Dorsolateral prefrontal cortex (tissue), 120 donors: ENCODE measurements at regions of chr9 and their contacts with region 1.

Region 1: DNA sequence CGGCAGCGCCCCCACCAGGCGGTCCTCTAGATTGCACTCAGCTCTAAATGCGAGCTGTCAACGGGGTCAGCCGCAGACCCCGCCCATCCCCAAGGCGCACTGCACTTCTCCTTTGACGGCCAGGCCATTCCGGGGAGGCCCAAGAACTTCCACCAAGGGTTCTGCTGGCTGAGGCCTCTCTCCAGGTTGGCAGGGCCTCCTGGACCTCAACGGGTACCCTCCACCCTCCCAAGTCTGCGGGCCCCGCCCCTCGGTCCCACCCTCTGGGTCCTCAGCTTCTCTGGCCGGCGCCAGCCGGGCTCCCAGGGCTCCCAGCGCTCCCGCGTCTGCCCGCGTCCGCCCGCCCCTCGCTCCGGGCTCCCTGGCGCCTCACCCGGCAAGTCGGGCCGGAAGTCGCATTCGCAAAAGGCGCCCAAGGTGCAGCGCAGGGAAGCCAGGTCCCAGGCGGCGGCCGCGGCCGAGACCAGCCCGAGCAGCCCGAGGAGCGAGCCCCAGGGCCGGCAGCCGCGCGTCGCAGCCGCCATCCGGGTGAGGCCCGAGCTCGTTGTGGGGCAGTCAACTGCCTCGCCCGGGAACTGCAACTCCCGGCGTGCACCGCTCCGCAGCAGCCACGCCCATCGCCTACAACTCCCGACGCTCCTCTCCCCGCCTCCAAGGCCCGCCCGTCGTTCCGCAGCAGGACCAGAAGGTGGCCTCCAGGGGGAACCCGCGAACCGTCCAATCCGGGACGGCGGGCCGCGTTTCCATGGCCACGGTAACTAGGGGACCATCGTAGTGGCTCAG is at the start of gene TOR2A:
- DNase-seq: peak; percentile 92 to 99 (median 97)
- H3K4me3 ChIP-seq: peak within 1 kb of the TSS; percentile 62 to 94 (median 83)
- H3K27ac ChIP-seq: peak within 1 kb of the TSS; percentile 78 to 98 (median 95)
- H3K27me3 ChIP-seq: no peaks in the 10 kb centered on the region
- CTCF ChIP-seq: peak; percentile 79 to 99 (median 93)
- total RNA-seq, gene TOR2A: 7.7 to 18.6 (median 12.5) TPM

Region 2: GRCh38 chr9:127264462-127265219 is 470.3 kb before region 1 on chr9 and contains the start of gene GARNL3:
- intact Hi-C with region 1: no loop called
- DNase-seq: peak in 3 of 10 donors; percentile 43 to 72 (median 47)
- H3K4me3 ChIP-seq: peak within 1 kb of the TSS; percentile 12 to 65 (median 51)
- H3K27ac ChIP-seq: peak within 1 kb of the TSS; percentile 43 to 95 (median 88)
- H3K27me3 ChIP-seq: no peaks in the 10 kb centered on the region
- CTCF ChIP-seq: peak in 2 of 56 donors; percentile 0 to 10
- total RNA-seq, gene GARNL3: 69.3 to 135 (median 98.3) TPM

Region 3: DNA sequence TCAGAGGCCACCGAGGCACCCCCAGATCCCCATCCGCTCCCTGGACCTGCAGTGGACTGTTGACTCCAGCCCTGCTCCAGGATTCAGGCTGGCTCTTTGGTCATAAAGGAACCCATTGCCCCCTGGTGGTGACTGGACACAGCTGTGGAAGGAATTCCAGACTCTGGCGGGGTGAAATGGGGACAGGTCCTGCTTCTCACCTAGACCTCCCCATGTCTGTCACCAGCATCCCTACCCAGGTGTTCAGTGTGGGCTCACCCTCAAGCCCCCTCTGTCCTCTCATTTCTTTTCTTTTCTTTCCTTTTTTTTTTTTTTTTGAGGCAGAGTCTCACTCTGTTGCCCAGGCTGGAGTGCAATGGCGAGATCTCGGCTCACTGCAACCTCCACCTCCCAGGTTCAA is 148.4 kb before region 1 on chr9:
- intact Hi-C with region 1: loop called (anchors 1 to 2 kb)
- DNase-seq: peak; percentile 52 to 87 (median 80)
- H3K4me3 ChIP-seq: no peak overlapping the region
- H3K27ac ChIP-seq: no peak overlapping the region
- H3K27me3 ChIP-seq: no peaks in the 10 kb centered on the region
- CTCF ChIP-seq: peak; percentile 67 to 95 (median 89)

Region 4: DNA sequence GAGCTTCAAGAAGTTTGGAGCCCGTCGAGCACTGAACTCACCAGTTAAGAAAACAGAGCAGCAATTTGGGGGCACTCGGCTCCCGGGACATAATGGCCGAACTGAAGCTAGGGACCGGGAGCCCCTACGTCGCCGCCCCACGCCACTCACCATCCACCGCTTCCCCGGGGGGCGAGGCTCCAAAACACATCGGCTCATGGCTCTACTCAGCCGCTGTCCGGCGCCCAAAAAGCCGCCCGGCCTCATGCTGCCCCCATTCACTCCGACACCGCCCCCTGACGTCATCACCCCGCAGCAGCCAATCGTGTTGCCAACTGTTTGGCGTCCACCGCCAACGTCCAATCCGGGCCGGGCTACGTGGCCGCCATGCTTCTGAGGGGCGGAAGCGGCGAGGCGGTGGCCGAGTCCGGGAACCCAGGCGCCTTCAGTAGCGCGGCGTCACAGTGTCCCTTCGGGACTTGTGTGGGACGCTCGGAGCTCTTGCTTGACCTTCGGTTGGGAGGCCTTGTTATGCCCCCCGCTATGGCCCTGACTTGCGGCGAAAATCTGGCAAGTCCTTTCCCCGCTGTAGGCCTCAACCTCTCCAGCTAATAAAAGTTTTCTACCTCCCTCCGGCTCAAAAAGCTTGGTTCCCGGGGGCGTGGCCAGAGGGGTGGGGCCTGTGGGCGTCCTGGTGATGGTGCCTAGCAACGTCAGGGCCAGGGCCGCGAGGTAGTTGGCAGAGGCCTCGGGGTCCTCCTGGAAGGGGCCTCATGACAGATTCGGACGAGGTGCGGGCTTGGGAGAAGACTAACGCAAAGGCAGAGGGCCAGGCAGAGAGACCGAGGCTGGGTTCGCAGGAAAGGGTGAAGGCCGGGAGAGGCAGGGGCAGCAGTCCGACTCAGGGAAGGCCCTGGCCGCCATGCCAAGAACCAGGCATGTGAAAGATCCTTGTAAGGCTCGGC is 19.3 kb before region 1 on chr9 and contains the starts of genes PTRH1 and TTC16:
- intact Hi-C with region 1: loop called in 1 of 2 experiments (anchors 2 kb)
- DNase-seq: peak; percentile 95 to 99 (median 98)
- H3K4me3 ChIP-seq: peak within 1 kb of the TSS; percentile 61 to 100 (median 85)
- H3K27ac ChIP-seq: peak within 1 kb of the TSS in 52 of 59 donors; percentile 6 to 89 (median 69)
- H3K27me3 ChIP-seq: no peaks in the 10 kb centered on the region
- CTCF ChIP-seq: peak in 27 of 56 donors; percentile 3 to 53 (median 24)
- total RNA-seq, gene PTRH1: 4.2 to 19.6 (median 11.9) TPM
- total RNA-seq, gene TTC16: 0.15 to 1.4 (median 0.47) TPM in 110 of 120 experiments, not detected in the others

Region 5: DNA sequence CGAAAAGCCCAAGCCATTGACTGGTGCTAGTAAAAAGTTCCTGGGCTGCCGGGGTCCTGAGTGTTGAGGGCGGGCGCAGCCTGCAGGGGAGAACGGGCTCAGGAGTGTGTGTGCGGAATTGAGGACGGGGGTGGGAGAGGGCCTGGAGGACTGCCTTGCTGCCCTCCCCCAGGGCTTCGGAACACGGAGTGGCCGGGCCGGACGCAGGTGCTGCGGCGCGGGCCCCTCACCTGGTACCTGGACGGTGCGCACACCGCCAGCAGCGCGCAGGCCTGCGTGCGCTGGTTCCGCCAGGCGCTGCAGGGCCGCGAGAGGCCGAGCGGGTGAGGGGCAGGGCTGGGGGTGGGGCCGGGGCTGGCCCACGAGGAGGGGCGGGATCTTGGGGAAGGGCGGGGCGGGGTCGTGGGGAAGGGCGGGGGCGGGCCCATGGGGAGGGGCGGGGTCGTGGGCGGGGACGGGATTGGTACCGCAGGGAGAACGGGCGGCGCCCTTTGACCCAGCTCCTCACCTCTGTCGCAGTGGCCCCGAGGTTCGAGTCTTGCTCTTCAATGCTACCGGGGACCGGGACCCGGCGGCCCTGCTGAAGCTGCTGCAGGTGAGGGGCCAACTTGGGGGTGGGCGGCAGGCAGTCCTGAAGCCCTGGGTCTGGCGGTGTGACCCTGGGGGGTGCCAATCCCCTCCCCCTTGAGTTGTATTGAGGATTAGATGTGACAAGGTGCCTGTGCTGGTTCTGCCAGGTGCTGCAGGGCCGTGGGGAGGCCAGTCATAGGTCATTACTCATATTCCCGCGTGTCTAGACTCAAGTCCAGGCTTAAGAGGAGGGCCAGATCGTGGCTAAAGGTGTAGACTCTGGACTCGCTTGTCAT is 74.8 kb after region 1 on chr9:
- intact Hi-C with region 1: no loop called
- DNase-seq: no peak
- H3K4me3 ChIP-seq: no peak overlapping the region
- H3K27ac ChIP-seq: no peak overlapping the region
- H3K27me3 ChIP-seq: no peaks in the 10 kb centered on the region
- CTCF ChIP-seq: no peak

Region 6: DNA sequence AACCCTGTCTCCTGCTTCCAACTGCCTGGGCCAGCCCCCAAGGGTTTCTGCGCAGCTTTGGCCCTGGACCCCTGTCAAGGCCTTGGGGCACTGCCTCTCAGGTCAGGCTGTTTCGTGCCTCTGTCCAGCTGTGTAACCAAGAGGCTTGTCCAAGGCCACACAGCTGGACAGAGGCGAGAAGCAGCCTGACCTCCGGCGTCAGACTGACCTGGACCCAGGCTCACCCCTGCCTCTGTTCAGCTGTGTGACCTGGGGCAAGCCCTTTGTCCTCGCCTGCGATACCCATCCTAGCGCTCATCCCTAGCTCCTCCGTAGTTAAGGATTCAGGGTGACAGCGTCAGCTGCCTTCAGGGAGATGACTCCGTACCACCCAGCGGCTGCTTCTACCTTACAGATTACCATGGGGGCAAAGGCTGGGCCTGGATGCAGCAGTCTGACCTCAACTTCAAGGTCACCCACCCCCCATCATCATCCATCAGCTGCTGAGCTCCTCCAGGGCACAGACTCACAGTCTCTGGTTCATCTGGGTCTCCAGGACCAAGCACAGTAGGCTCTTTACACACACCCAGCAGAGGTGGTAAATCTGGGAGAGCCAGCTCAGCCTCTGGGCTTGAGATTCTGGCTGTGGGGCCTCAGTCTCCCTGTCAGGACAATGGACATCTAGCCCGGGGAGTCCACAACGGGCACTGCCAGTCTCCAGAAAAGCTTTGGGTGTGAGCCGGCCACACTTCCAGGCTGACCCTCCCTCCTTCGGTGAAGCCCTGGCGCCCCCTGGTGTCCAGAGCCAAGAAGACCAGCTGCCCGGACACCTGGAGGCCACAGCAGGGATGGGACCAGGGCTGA is 134.6 kb after region 1 on chr9:
- intact Hi-C with region 1: loop called (anchors 2 to 5 kb)
- DNase-seq: peak; percentile 62 to 87 (median 80)
- H3K4me3 ChIP-seq: no peak overlapping the region
- H3K27ac ChIP-seq: peak overlapping the region in 17 of 59 donors; percentile 10 to 64 (median 34)
- H3K27me3 ChIP-seq: no peaks in the 10 kb centered on the region
- CTCF ChIP-seq: peak; percentile 57 to 89 (median 81)